Breast epithelium (tissue), 4 donors: ENCODE measurements at regions of chrX and their contacts with region 1.

Region 1: DNA sequence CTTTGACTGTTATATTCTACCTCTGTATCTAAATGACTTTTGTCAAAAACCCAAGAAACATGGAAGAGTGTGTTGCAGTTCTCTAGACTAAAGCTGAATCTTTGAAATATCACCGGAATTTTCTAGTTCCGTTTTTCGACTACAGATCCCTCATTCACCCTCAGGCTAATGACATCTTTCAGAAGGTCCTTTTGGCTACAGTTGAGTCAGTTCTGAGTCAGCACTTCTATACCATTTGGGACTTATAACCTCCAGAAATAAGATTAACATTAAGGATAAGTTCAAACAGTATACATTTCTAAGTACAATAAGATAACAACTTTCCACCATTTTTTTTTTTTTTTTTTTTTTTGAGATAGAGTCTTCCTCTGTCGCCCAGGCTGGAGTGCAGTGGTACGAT is 331.0 kb upstream of the CPXCR1 start:
- DNase-seq: no peak
- H3K4me3 ChIP-seq: no peak overlapping the region
- H3K27ac ChIP-seq: no peak overlapping the region
- H3K4me1 ChIP-seq: no peaks in the 10 kb centered on the region
- H3K27me3 ChIP-seq: peaks cover 0 to 10% of the 10 kb centered on the region in 2 donors
- CTCF ChIP-seq: no peak
- POLR2A ChIP-seq: no peak

Region 2: DNA sequence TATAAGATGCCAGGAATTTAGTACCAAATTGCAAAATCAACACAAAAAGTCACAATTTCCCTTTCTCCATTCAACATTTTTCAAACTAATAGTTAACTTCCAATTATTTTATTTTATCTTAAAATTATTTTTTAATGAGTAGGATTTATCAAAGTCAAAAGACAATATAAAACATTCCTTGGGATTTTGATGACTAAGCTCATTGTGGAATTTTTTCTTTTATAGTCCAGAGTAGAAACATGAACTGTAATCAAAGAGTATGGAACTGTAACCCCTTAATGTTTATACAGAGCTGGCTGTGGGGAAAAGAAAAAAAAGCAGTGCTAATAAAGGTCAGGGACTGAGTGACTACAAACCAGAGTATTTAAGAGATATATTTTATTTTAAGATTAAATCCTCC is 37.6 kb before region 1 on chrX:
- intact Hi-C with region 1: no loop called
- DNase-seq: no peak
- H3K4me3 ChIP-seq: no peak overlapping the region
- H3K27ac ChIP-seq: no peak overlapping the region
- H3K4me1 ChIP-seq: no peaks in the 10 kb centered on the region
- H3K27me3 ChIP-seq: peaks cover 0 to 27% of the 10 kb centered on the region in 2 donors
- CTCF ChIP-seq: no peak
- POLR2A ChIP-seq: no peak

Region 3: DNA sequence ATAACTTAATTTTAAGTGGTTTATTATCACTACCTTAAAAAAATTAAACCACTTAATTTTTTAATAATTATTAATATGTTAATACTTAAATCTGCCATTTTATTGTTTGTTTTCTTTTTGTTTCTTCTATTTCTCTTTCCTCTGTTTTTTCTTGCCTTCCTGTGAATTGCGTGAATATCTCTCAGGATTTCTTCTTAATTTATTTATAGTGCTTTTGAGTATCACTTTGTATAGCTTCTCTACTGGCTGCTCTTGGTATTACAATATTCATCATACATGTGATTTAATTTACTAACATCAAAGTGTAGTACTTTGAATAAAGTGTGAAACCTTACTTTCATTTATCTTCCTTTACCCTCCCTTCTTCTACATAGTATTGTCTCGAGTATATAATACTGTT is 18.5 kb before region 1 on chrX:
- intact Hi-C with region 1: loop called (anchors 2 kb)
- DNase-seq: no peak
- H3K4me3 ChIP-seq: no peak overlapping the region
- H3K27ac ChIP-seq: no peak overlapping the region
- H3K4me1 ChIP-seq: no peaks in the 10 kb centered on the region
- H3K27me3 ChIP-seq: no peaks in the 10 kb centered on the region
- CTCF ChIP-seq: no peak
- POLR2A ChIP-seq: no peak

Region 4: DNA sequence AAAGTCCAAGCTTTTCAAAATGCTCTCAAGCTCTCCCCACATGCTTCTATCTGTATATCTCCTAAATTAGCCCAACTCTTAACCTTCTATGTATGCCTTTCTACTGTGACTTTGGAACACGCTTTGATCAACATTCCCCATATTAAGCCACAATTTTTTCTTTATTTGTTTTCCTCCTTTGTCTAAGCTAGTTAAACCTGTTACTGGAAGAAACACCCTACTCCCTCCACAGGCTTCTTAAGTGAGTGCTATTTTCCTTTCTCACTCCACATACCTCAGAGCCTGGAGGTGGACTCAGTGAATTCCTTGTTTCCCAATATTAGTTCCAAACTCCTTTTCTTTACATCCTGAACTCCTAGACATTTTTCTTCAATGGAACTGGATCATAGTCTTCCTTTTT is 27.3 kb after region 1 on chrX:
- intact Hi-C with region 1: no loop called
- DNase-seq: no peak
- H3K4me3 ChIP-seq: no peak overlapping the region
- H3K27ac ChIP-seq: no peak overlapping the region
- H3K4me1 ChIP-seq: no peaks in the 10 kb centered on the region
- H3K27me3 ChIP-seq: peaks cover 0 to 5% of the 10 kb centered on the region in 2 donors
- CTCF ChIP-seq: no peak
- POLR2A ChIP-seq: no peak